ENCODE measurements at regions of chr15 and their contacts with region 1.

Region 1: GRCh38 chr15:39799552-39800011 is 16.9 kb upstream of the FSIP1 start:
- DNase-seq: no peak
- H3K4me3 Mint-ChIP-seq: no peak overlapping the region
- H3K27ac Mint-ChIP-seq: no peak overlapping the region
- H3K4me1 Mint-ChIP-seq: no peaks in the 10 kb centered on the region
- H3K27me3 Mint-ChIP-seq: peaks cover 28% of the 10 kb centered on the region

Region 2: GRCh38 chr15:39273717-39274411 is 525.7 kb before region 1 on chr15:
- CTCF ChIA-PET with region 1: no interaction called
- POLR2A ChIA-PET with region 1: no interaction called
- DNase-seq: no peak
- H3K4me3 Mint-ChIP-seq: no peak overlapping the region
- H3K27ac Mint-ChIP-seq: no peak overlapping the region
- H3K4me1 Mint-ChIP-seq: no peaks in the 10 kb centered on the region
- H3K27me3 Mint-ChIP-seq: no peaks in the 10 kb centered on the region

Region 3: GRCh38 chr15:39756806-39757522 is 42.6 kb before region 1 on chr15:
- CTCF ChIA-PET with region 1: no interaction called
- POLR2A ChIA-PET with region 1: no interaction called
- DNase-seq: no peak
- H3K4me3 Mint-ChIP-seq: no peak overlapping the region
- H3K27ac Mint-ChIP-seq: no peak overlapping the region
- H3K4me1 Mint-ChIP-seq: no peaks in the 10 kb centered on the region
- H3K27me3 Mint-ChIP-seq: peaks cover 30% of the 10 kb centered on the region

Region 4: GRCh38 chr15:39782441-39783138 is 17.0 kb before region 1 on chr15 and contains the start of gene FSIP1:
- CTCF ChIA-PET with region 1: interaction called, 12 read pairs
- POLR2A ChIA-PET with region 1: interaction called, 3 read pairs
- DNase-seq: peak; percentile 97
- H3K4me3 Mint-ChIP-seq: peak within 1 kb of the TSS; percentile 88
- H3K27ac Mint-ChIP-seq: peak within 1 kb of the TSS; percentile 89
- H3K4me1 Mint-ChIP-seq: peaks cover 48% of the 10 kb centered on the region
- H3K27me3 Mint-ChIP-seq: peaks cover 2% of the 10 kb centered on the region
- total RNA-seq, gene FSIP1: 0.58 to 0.88 TPM

Region 5: DNA sequence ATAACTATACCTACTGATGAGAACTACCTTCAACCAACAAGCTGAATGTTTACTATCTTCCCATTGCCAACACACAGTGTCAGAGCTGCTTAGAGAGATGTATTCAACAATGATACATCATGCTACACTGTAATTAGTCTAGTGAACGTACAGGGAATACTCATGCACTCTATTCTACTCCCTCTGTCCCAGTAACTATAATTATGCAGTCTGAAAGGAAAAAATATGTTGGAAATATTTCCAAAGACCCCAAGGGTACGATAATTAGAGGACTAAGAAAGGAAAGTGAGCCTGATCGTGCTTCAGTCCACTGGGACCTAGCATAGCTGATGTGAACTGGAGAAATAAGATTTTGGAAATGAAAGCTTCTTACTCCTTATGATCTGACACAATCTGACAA is 20.0 kb after region 1 on chr15:
- CTCF ChIA-PET with region 1: no interaction called
- POLR2A ChIA-PET with region 1: no interaction called
- DNase-seq: no peak
- H3K4me3 Mint-ChIP-seq: no peak overlapping the region
- H3K27ac Mint-ChIP-seq: no peak overlapping the region
- H3K4me1 Mint-ChIP-seq: no peaks in the 10 kb centered on the region
- H3K27me3 Mint-ChIP-seq: peaks cover 9% of the 10 kb centered on the region

Region 6: DNA sequence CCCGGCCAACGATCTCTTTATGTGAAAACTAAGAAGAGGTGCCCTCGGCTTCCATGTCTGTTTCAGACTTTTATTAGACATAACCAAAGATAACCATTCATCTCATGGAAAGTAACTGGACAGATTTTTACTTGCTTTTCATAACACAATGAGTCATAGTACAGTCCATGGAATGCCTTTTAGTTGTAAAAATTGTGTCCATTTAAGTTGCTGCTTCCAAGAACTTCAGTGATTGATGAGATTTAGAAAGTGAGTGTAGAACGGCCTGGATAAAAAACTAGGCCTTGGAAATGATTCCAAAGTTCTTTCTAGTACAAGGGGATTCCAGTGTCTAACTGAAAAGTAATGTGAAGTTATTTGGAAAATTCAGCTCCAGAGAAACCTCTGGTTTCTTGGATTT is 145.1 kb after region 1 on chr15:
- CTCF ChIA-PET with region 1: no interaction called
- POLR2A ChIA-PET with region 1: no interaction called
- DNase-seq: no peak
- H3K4me3 Mint-ChIP-seq: no peak overlapping the region
- H3K27ac Mint-ChIP-seq: no peak overlapping the region
- H3K4me1 Mint-ChIP-seq: peaks cover 26% of the 10 kb centered on the region
- H3K27me3 Mint-ChIP-seq: no peaks in the 10 kb centered on the region